ENCODE measurements at regions of chr2 and their contacts with region 1.

Region 1: DNA sequence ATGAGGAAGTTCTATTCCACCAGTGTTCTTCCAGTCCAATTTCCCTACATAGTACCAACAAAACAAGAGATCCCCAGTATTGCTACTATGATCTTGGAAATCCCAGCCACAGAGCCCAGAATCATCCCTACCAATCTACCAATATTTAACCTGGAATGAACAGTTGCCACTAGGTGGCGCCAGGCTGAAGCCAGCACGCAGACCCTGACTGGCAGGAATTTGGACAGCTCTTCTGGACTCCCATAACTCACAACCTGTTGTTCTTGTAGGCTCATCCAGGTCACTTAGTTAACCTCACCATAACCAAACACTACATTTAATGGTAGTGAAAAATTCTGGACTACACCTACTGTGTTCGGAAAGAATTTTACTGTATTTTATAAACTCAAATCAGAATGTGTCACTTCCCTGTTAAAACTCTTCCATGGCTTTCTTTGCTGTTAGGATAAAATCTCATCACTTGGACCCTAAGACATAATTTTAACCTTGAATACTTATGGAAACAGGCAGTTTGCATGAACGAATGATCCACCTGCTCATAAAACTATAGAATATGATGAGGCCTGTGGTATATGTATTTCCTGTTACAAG is 59.8 kb upstream of the SLC38A11 start:
- DNase-seq: peak; percentile 29 to 68
- ATAC-seq: peak; percentile 57 to 78 (median 59)
- H3K4me3 ChIP-seq: no peak overlapping the region
- H3K4me3 Mint-ChIP-seq: no peak overlapping the region
- H3K27ac ChIP-seq: no peak overlapping the region
- H3K27ac Mint-ChIP-seq: no peak overlapping the region
- H3K4me1 ChIP-seq: no peaks in the 10 kb centered on the region
- H3K4me1 Mint-ChIP-seq: peaks cover 0 to 5% of the 10 kb centered on the region in 2 donors
- H3K27me3 ChIP-seq: no peaks in the 10 kb centered on the region
- H3K27me3 Mint-ChIP-seq: peaks cover 0 to 11% of the 10 kb centered on the region in 2 donors
- CTCF ChIP-seq: peak; percentile 77

Region 2: GRCh38 chr2:165173215-165173614 is 158.1 kb after region 1 on chr2:
- intact Hi-C with region 1: no loop called
- DNase-seq: no peak
- ATAC-seq: no peak
- H3K4me3 ChIP-seq: no peak overlapping the region
- H3K4me3 Mint-ChIP-seq: no peak overlapping the region
- H3K27ac ChIP-seq: no peak overlapping the region
- H3K27ac Mint-ChIP-seq: no peak overlapping the region
- H3K4me1 ChIP-seq: no peaks in the 10 kb centered on the region
- H3K4me1 Mint-ChIP-seq: no peaks in the 10 kb centered on the region
- H3K27me3 ChIP-seq: no peaks in the 10 kb centered on the region
- H3K27me3 Mint-ChIP-seq: no peaks in the 10 kb centered on the region
- CTCF ChIP-seq: no peak

Region 3: DNA sequence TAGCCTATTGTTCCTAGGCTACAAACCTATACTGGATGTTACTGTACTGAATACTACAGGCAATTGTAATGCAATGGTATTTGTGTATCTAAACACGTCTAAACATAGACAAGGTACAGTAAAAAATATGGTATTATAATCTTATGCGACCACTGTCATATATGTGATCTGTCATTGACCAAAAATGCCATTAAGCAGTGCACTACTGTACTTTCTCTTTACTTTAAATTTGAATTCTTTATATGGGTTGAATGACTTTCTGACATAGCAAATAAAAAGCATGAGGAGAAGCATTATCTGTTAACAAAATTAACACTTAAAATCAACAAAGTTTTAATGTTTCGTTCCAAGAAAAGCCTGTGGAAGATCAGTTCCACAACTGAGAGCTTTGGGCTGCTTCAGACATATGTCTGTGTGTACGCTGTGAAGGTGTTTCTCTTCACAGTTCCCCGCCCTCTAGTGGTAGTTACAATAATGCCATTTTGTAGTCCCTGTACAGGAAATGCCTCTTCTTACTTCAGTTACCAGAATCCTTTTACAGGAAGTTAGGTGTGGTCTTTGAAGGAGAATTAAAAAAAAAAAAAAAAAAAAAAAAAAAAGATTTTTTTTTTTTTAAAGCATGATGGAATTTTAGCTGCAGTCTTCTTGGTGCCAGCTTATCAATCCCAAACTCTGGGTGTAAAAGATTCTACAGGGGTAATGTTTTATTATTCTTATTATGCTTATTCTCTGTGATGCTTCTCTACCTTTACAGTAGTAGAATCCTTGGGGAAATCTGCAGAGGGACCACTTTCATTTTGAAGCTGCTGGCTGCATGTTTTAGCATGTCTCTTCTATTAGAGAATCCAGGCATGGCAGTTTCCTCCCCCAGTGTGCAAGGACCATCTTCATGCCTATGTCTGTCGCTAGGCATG is 278.6 kb after region 1 on chr2:
- intact Hi-C with region 1: loop called (anchors 5 kb)
- DNase-seq: peak in 1 of 2 donors; percentile 90
- ATAC-seq: peak; percentile 99 to 100 (median 100)
- H3K4me3 ChIP-seq: no peak overlapping the region
- H3K4me3 Mint-ChIP-seq: no peak overlapping the region
- H3K27ac ChIP-seq: no peak overlapping the region
- H3K27ac Mint-ChIP-seq: no peak overlapping the region
- H3K4me1 ChIP-seq: no peaks in the 10 kb centered on the region
- H3K4me1 Mint-ChIP-seq: no peaks in the 10 kb centered on the region
- H3K27me3 ChIP-seq: peaks cover 7% of the 10 kb centered on the region
- H3K27me3 Mint-ChIP-seq: peaks cover 13 to 17% of the 10 kb centered on the region in 2 donors
- CTCF ChIP-seq: peak; percentile 71

Region 4: DNA sequence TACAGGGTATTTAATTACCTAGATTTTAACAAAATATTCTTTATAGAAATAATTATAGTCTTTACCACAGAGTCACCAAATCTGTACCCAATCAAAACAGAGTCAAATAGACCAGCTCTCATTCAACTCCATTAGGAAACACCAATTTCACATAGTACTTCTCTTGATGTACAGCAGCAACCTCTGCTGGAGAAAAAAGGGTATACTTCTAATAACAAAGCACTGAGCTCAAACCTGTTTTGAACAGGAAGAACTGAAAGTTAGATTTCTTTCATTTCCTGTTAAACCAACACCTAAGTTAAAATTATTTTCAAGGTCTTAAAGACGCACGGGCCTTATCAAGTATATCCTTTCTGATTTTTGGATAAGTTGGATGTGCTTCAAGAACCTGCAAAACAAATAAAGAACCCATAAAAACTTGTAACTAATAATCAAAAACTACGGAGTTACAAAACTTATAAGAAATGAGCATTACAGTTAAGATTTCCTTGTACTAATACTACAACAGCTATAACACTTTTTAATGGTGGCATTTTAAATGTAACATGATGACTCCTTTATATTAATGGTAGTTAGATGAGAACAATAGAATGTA is 859.4 kb after region 1 on chr2:
- intact Hi-C with region 1: loop called (anchors 1 kb)
- DNase-seq: peak in 1 of 2 donors; percentile 75
- ATAC-seq: peak; percentile 87 to 95 (median 91)
- H3K4me3 ChIP-seq: no peak overlapping the region
- H3K4me3 Mint-ChIP-seq: peak overlapping the region; percentile 13
- H3K27ac ChIP-seq: no peak overlapping the region
- H3K27ac Mint-ChIP-seq: peak overlapping the region; percentile 49 to 57
- H3K4me1 ChIP-seq: peaks cover 2% of the 10 kb centered on the region
- H3K4me1 Mint-ChIP-seq: peaks cover 26 to 28% of the 10 kb centered on the region in 2 donors
- H3K27me3 ChIP-seq: no peaks in the 10 kb centered on the region
- H3K27me3 Mint-ChIP-seq: no peaks in the 10 kb centered on the region
- CTCF ChIP-seq: peak; percentile 87

Measured in natural killer cell (primary cell).